Ovary (tissue), 10 donors: ENCODE measurements at regions of chr15 and their contacts with region 1.

Region 1: DNA sequence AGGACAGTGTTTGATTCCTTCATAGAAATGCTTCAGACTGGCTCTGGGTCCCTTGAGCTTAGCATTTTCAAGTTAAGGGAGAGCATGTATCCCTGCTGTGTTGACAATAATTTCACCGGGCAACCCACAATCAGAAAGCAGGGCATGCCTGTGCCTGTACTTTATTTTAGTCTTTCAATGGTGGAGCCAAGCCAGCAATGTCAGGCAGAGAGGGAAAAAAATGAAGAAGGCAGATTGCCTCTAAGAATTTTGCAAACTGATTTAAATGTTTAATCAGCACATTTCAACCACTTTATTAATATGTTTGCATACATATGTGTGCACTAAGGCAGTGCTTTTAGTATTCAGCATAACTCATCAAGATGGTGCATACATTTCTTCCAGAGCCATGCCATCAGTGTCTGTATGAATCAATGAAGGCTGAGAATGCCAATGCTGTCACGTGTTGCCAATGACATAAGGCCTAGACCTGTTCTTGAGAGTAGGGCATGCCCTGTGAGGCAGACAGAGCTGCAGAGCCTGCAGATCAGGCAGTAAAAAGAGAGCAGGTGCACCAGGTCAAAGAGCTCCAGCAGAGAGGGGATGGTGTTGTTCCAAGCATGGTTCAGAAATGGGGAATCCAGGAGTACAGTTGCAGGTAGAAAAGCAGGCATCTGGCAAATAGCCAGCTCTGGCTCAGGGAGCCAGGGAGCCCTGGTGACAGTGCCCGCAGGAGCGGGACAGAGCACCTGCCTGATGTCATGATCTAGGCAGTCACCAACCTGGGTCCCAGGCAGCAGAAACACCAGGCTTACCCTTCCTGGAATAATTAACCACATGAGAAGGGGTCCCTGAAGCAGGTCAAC is 508.5 kb downstream of the GABRG3 start:
- DNase-seq: no peak
- H3K4me3 ChIP-seq: no peak overlapping the region
- H3K27ac ChIP-seq: no peak overlapping the region
- H3K4me1 ChIP-seq: no peaks in the 10 kb centered on the region
- H3K27me3 ChIP-seq: no peaks in the 10 kb centered on the region
- CTCF ChIP-seq: no peak
- EP300 ChIP-seq: no peak
- POLR2A ChIP-seq: no peak

Region 2: DNA sequence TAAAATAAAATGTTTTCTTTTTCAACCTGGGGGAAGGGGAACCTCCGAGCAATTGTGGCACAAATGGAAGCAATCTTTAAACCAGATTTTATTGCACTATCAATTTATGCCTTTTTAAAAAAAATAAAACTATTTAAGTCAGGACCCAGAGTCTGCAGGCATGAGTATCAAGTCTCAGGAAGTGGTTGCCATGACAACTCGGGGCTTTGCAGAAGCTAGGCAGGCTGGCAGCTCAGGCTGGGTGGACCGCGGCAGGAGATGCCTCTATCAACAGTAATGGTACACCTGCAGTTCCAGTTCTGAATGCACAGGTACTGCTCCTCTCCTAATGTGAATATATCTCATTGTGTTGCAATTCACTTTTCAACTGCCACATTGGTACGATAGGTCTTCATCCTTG is 60.8 kb before region 1 on chr15:
- intact Hi-C with region 1: loop called in 1 of 4 experiments (anchors 10 kb)
- DNase-seq: no peak
- H3K4me3 ChIP-seq: no peak overlapping the region
- H3K27ac ChIP-seq: no peak overlapping the region
- H3K4me1 ChIP-seq: no peaks in the 10 kb centered on the region
- H3K27me3 ChIP-seq: no peaks in the 10 kb centered on the region
- CTCF ChIP-seq: no peak
- EP300 ChIP-seq: no peak
- POLR2A ChIP-seq: no peak